Adrenal gland (tissue), 19 donors: ENCODE measurements at regions of chr1 and their contacts with region 1.

Region 1: GRCh38 chr1:54095546-54096226 is 42.3 kb downstream of the TCEANC2 start:
- DNase-seq: peak; percentile 32 to 79 (median 40)
- H3K4me3 ChIP-seq: no peak overlapping the region
- H3K27ac ChIP-seq: peak overlapping the region in 2 of 5 donors; percentile 60 to 76
- H3K4me1 ChIP-seq: peaks cover 12 to 29% of the 10 kb centered on the region in 2 donors
- H3K27me3 ChIP-seq: no peaks in the 10 kb centered on the region
- CTCF ChIP-seq: peak in 1 of 6 experiments; percentile 9
- POLR2A ChIP-seq: no peak

Region 2: GRCh38 chr1:53541761-53542550 is 553.7 kb before region 1 on chr1:
- intact Hi-C with region 1: loop called in 1 of 2 experiments (anchors 5 kb)
- DNase-seq: peak; percentile 29 to 71 (median 64)
- H3K4me3 ChIP-seq: no peak overlapping the region
- H3K27ac ChIP-seq: peak overlapping the region in 3 of 5 donors; percentile 38 to 85 (median 78)
- H3K4me1 ChIP-seq: no peaks in the 10 kb centered on the region
- H3K27me3 ChIP-seq: no peaks in the 10 kb centered on the region
- CTCF ChIP-seq: peak in 4 of 6 experiments; percentile 18 to 35 (median 21)
- POLR2A ChIP-seq: no peak